HAP-1 (cell line): ENCODE measurements at regions of chr14 and their contacts with region 1.

Region 1: GRCh38 chr14:73728717-73729330 is 14.6 kb upstream of the PNMA1 start:
- DNase-seq: peak; percentile 82 to 93
- H3K4me3 ChIP-seq: no peak overlapping the region
- H3K4me1 ChIP-seq: peaks cover 4% of the 10 kb centered on the region
- H3K27me3 ChIP-seq: no peaks in the 10 kb centered on the region

Region 2: DNA sequence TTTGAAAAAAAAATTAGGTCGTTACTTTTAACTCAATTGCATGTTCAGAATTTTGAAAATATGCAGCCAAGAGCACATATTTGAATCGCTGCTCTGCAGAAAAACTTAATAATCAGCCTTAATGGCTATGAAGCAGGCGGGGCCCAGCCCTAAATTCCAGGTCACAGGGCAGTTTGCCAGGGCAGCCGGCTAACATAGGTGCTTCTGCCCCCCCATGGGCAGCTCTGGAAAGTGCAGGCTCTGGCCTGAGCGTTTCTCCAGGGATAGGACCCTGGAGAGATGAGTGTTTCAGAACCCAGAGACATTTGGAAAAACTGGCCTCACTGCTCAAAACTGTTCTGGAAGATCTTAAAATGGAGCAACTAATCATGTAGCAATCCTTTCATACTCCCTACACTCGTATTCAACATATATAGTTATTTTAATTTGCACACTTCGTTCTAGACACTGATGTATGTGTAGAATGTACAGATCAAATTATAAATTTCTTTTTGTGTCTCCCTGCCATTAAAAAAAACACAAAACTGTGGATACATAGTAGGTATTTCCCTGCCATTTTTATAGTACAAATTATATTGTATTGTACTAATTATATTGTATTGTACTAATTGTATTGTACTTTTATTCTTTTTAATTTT is 96.8 kb after region 1 on chr14:
- in situ Hi-C with region 1: loop called (anchors 5 kb)
- DNase-seq: peak; percentile 78 to 96
- H3K4me3 ChIP-seq: no peak overlapping the region
- H3K4me1 ChIP-seq: peaks cover 25% of the 10 kb centered on the region
- H3K27me3 ChIP-seq: no peaks in the 10 kb centered on the region

Region 3: DNA sequence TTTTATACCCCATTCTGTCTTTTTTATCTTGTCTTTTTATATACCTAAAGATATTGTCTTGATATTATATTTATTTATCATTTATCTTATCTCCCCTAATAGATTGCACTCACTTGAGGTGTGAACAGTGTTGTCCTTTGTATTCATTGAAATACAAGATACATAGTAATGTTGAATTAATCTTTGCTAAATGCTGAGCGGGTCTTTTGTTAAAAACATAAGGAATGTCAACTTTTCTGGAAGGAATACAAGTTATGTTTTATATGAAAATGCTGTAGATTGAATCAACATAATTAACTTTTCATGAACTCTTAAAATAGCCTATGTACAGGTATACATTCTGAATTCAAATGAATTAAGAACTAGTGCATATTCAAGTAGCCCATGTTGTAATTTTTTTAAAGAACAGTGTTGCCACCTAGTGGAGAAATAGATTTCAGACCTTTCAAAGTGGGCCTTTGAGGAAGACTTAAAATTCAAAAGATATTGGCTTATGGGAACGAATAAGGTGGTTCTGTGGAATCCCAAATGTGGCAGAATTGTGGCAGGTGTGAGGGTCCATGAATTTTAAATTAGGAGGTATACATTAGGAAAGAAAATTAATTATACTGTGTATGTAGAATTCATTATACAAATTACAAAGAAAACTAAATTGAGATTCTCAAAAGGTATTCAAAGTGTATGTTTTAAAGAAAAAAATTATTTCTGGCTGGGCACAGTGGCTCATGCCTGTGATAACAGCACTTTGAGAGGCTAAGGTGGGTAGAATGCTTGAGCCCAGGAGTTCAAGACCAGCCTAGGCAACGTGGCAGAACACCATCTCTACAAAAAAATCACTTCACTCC is 309.4 kb after region 1 on chr14:
- in situ Hi-C with region 1: loop called (anchors 10 kb)
- DNase-seq: peak; percentile 20 to 69
- H3K4me3 ChIP-seq: no peak overlapping the region
- H3K4me1 ChIP-seq: no peaks in the 10 kb centered on the region
- H3K27me3 ChIP-seq: no peaks in the 10 kb centered on the region